Mammary epithelial cell (primary cell): ENCODE measurements at regions of chr11 and their contacts with region 1.

Region 1: DNA sequence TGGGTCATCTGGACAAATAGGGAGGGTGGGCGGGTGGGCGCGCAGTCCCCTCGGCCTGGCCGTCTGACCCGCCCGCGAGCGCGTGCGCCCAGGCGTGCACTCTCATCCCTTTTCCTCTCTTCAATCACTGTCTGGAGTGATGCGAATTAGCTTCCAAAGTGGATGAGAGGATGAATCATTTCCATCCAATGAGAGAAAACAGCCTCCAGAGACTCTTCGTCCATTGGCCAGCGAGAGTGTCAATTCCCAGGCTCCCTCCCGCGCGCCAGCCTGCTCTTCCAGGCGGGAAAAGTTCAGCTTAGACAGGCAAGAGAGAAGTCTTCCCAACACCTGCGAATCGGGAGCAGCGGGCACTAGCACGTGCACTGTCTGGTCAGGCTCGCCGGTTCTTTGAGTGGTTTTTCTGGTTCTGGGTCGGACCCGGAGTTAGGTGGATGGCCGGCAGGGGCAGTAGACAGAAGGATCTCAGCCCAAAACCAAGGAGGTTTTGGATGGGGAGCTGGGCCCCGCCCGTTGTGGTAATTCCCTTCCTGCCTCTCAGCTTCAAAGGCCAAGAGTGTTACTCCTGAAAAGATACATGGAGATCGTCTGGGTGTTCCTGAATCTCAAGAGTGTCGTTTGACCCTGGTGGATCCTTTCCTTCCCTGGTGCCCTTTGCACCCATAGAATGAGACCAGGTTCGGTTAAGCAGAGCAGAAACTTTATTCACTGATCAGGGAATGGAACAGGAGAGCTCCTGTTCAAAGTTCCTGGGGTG is 33.4 kb upstream of the GLYATL1 start:
- DNase-seq: peak; percentile 93
- H3K4me3 ChIP-seq: peak overlapping the region in 2 of 3 experiments; percentile 66 to 81
- H3K27ac ChIP-seq: no peak overlapping the region
- H3K4me1 ChIP-seq: peaks cover 23% of the 10 kb centered on the region
- H3K27me3 ChIP-seq: no peaks in the 10 kb centered on the region
- CTCF ChIP-seq: peak; percentile 35 to 54

Region 2: GRCh38 chr11:58796333-58796732 is 109.6 kb before region 1 on chr11:
- CTCF ChIA-PET with region 1: no interaction called
- dilution Hi-C with region 1: no loop called
- in situ Hi-C with region 1: no loop called
- intact Hi-C with region 1: no loop called
- DNase-seq: no peak
- H3K4me3 ChIP-seq: no peak overlapping the region
- H3K27ac ChIP-seq: no peak overlapping the region
- H3K4me1 ChIP-seq: no peaks in the 10 kb centered on the region
- H3K27me3 ChIP-seq: no peaks in the 10 kb centered on the region
- CTCF ChIP-seq: no peak

Region 3: GRCh38 chr11:58923300-58923788 is 17.4 kb after region 1 on chr11:
- CTCF ChIA-PET with region 1: interaction called, 3 read pairs
- dilution Hi-C with region 1: no loop called
- in situ Hi-C with region 1: no loop called
- intact Hi-C with region 1: loop called (anchors 2 kb)
- DNase-seq: peak; percentile 86
- H3K4me3 ChIP-seq: peak overlapping the region; percentile 7 to 44 (median 13)
- H3K27ac ChIP-seq: no peak overlapping the region
- H3K4me1 ChIP-seq: peaks cover 10% of the 10 kb centered on the region
- H3K27me3 ChIP-seq: no peaks in the 10 kb centered on the region
- CTCF ChIP-seq: peak; percentile 21 to 35

Region 4: GRCh38 chr11:58963528-58964104 is 57.7 kb after region 1 on chr11:
- CTCF ChIA-PET with region 1: interaction called, 4 read pairs
- dilution Hi-C with region 1: no loop called
- in situ Hi-C with region 1: no loop called
- intact Hi-C with region 1: loop called (anchors 1 kb)
- DNase-seq: peak; percentile 89
- H3K4me3 ChIP-seq: no peak overlapping the region
- H3K27ac ChIP-seq: no peak overlapping the region
- H3K4me1 ChIP-seq: peaks cover 4% of the 10 kb centered on the region
- H3K27me3 ChIP-seq: peaks cover 2% of the 10 kb centered on the region
- CTCF ChIP-seq: no peak

Region 5: DNA sequence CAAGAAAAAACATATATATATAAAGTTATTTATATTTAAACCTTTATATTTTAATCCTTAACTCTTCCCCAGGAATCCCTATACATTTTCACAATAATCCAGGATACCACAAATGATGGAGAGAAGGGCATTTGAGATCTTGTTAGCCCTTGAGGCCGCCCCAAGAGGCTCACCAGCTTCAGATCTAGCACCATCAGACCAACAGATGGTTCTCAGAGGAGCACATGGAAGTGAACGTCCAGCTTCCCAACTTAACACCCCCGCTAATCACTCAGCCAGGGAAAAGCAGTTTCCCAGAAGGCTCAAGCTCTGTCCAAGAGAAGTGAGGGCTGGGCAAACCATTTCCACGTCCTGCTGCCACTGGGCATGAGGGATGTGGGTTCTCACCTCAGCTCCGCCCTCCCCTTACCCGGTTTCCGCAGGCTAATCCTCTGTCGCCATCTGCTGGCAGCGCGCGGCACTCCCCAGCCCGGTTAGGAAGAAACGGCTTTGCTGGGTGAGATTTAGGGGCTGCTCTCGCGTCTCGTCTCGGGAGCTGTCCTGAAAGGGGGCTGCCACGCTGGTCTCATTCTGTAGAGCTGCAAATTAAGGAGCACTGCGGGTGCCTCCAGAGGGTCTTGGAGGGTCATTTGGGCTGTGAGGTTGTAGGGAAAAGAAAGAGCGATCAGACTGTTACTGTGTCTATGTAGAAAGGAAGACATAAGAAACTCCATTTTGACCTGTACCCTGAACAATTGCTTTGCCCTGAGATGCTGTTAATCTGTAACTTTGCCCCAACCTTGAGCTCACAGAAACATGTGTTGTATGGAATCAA is 230.0 kb after region 1 on chr11:
- CTCF ChIA-PET with region 1: interaction called, 4 read pairs
- dilution Hi-C with region 1: loop called (anchors 10 kb)
- in situ Hi-C with region 1: no loop called
- intact Hi-C with region 1: loop called (anchors 2 kb)
- DNase-seq: peak; percentile 36
- H3K4me3 ChIP-seq: no peak overlapping the region
- H3K27ac ChIP-seq: no peak overlapping the region
- H3K4me1 ChIP-seq: peaks cover 6% of the 10 kb centered on the region
- H3K27me3 ChIP-seq: no peaks in the 10 kb centered on the region
- CTCF ChIP-seq: peak; percentile 99 to 100